ENCODE measurements at regions of chr10 and their contacts with region 1.

Region 1: DNA sequence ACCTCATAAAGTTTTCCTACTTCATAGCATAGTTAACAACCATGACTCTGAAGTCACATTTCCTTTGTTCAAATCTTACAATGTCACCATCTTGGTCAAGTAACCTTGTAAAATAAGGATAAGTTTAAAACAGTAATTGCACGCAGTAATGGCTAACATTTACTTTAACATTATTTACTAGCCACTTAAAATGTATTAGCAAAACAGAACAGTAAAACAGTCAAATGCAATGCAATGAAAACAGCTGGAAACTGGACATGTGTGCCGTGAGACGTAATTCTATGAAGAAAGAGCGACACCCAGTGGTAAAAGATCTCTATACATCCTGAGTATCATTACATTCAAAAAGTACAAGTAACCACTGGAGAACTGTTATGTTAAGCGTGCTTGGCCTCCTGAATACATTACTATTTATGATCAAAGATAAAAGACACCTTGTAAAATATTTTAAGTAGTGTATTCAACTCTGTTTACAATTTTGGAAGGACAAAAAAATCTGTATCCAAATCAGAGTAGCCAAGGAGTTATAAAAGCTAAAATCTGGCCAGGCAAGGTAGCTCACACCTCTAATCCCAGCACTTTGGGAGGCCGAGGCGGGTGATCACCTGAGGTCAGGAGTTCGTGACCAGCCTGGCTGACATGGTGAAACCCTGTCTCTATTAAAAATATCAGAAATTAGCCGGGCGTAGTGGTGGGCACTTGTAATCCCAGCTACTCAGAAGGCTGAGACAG is 27.2 kb downstream of the ATE1 start:
- H3K4me3 ChIP-seq: no peak overlapping the region
- H3K27ac ChIP-seq: no peak overlapping the region
- H3K4me1 ChIP-seq: peaks cover 9% of the 10 kb centered on the region; the same call in 1 of the 2 replicates
- CTCF ChIP-seq: peak; percentile 58; the same call in 1 of the 2 replicates

Region 2: DNA sequence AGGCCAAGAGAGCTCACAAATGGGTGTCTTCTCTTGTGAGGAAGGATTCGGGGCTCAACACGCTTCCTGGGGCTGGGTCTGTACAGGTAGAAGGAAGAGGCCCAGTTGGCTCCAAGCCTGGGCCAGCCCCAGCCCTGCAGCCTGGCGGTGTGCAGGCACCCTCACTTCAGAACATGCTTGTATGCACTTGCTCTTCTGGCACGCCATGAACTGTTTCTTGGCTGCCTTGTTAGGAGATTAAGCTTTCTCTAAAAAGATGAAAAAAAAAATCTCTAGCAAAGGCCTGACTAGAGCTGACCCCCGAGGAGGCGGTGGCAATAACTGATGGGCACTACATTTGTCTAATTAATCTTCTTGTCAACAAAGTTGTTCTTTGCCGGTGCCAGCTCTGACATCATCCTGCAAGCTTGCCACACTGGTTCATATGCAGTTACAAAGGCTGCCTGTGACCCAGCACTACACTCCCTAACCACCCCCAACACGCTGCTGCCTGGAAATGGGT is 954.8 kb before region 1 on chr10:
- CTCF ChIA-PET with region 1: interaction called, 16 read pairs
- POLR2A ChIA-PET with region 1: no interaction called
- H3K4me3 ChIP-seq: no peak overlapping the region
- H3K27ac ChIP-seq: no peak overlapping the region
- H3K4me1 ChIP-seq: peaks cover 7% of the 10 kb centered on the region
- CTCF ChIP-seq: no peak

Region 3: DNA sequence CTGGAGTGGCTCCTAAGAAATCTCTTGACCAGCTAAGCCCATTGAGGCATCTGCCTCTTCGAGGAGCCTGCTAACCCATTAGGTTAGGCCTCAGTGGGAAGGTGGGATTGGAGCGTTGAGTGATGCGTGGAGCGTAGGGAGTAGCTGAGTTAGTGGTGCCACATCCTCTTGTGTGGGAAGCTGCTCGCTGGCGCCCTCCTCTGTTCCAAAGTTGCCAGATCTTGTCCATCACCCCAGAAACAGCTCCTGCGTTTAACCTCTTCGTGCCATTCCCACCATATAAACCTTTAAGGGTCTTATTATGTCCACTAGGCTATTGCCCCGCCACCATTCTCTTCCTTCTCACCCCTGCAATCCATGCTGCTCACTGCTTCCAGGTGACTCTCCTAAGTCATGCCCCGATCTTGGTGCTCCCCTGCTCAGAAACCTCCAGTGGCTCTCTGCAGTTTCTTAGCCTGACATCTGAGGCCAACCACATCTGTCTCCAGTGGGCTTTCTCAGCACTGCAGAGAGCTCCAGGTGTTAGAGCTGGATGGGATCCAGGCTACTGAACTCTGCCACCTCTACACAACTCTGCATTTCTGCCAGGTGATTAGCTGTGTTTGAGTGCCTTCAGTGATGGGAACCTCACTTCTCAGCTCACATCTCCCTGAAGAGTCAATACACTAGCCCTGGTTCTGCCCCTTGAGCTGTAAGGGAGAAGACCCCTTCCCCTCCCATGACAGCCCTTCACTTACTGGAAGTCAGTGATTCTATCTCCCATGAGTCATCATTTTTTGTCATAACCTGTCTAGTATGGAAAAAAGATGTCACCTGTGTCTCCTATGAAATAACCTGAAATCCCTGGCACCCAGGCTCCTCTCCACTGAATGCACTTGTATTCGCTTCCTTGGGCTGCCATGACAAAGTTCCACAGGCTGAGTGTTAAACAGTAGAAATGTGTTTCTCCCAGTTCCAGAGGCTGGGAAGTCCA is 237.4 kb before region 1 on chr10:
- CTCF ChIA-PET with region 1: interaction called, 11 read pairs
- POLR2A ChIA-PET with region 1: no interaction called
- H3K4me3 ChIP-seq: no peak overlapping the region
- H3K27ac ChIP-seq: no peak overlapping the region
- H3K4me1 ChIP-seq: 0 out of 2 replicates have a peak, but pooled peaks cover 2% of the 10 kb centered on the region
- CTCF ChIP-seq: no peak

Region 4: GRCh38 chr10:121823993-121824463 is 76.6 kb before region 1 on chr10:
- CTCF ChIA-PET with region 1: interaction called, 20 read pairs
- POLR2A ChIA-PET with region 1: no interaction called
- H3K4me3 ChIP-seq: no peak overlapping the region
- H3K27ac ChIP-seq: no peak overlapping the region
- H3K4me1 ChIP-seq: peaks cover 15% of the 10 kb centered on the region; the same call in 1 of the 2 replicates
- CTCF ChIP-seq: no peak; the same call in 1 of the 2 replicates

Region 5: GRCh38 chr10:121886997-121887622 is 13.5 kb before region 1 on chr10:
- CTCF ChIA-PET with region 1: interaction called, 20 read pairs
- POLR2A ChIA-PET with region 1: no interaction called
- H3K4me3 ChIP-seq: no peak overlapping the region
- H3K27ac ChIP-seq: no peak overlapping the region
- H3K4me1 ChIP-seq: no peaks in the 10 kb centered on the region
- CTCF ChIP-seq: peak; percentile 43; the same call in 1 of the 2 replicates

Region 6: DNA sequence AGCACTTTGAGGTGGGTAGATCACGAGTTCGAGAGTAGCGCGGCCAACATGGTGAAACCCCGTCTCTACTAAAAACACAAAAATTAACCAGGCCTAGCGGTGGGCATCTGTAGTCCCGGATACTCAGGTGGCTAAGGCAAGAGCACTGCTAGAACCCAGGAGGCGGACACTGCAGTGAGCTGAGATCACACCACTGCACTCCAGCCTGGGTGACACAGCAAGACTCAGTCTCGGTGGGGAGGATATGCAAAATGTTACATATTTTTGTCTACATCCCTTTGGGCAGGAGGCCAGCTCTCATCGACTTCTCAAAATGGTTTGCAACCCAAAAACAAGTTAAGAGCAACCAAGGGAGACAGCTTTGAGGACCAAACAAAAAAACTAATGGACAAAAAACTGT is 19.1 kb after region 1 on chr10:
- CTCF ChIA-PET with region 1: interaction called, 10 read pairs
- POLR2A ChIA-PET with region 1: no interaction called
- H3K4me3 ChIP-seq: no peak overlapping the region
- H3K27ac ChIP-seq: no peak overlapping the region
- H3K4me1 ChIP-seq: no peaks in the 10 kb centered on the region
- CTCF ChIP-seq: no peak

Region 7: DNA sequence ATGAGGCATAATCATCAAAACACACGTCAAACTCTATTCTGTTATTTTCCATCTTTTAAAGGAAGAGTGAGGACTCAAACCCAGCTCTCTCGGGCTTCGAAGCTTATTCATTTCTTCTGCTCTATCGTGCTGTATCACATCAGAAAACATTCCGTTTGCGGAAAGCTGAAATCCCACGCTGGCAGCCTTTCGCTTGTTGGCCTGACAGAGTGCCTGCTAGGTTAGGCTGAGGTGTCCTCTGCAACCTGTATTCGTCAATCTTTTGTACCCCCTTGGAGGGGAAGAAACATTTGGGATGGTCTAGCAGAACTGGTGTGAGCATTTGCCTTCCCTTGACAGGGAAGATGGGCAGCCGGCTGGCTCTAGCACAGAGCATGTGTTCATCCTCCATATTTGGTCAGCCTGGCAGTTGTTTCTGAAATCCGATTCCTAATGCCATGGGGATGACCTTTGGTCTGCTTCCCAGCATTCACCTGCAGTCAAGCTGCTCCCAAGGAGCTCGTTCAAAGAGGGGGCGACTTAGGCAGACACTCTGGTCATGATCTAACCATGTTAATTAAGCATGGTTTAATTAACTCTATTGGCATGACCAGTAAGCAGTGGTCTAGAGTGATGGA is 143.5 kb after region 1 on chr10:
- CTCF ChIA-PET with region 1: no interaction called
- POLR2A ChIA-PET with region 1: no interaction called
- H3K4me3 ChIP-seq: no peak overlapping the region
- H3K27ac ChIP-seq: no peak overlapping the region
- H3K4me1 ChIP-seq: peaks cover 6% of the 10 kb centered on the region
- CTCF ChIP-seq: no peak

Measured in HEK293 (cell line).